Activated CD8-positive, alpha-beta memory T cell treated with anti-CD3 and anti-CD28 coated beads, Interleukin-2, amount 10 ng/mL, durations not matched to agents 7 days and 5 days (primary cell): ENCODE measurements at regions of chr11 and their contacts with region 1.

Region 1: DNA sequence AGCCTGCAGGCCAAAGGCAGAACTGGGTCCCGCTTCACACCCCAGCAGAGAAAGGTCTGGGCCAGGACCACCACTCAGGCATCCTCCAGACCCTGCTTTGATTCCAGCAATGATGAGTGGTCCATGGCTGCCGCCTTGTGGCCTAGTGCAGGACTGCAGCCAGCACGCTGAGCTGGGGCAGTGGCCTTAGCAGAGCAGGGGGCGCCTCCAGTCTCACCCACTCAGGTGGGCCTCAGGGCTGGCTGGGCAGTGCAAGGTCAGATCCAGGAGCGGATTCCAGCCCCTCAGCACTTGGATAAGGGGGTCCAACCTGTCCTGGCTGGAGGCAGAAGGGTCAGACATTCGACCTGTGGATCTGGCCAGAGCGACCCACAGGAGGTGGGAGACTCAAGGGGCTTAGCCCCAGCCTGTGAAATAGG is 9.6 kb upstream of the PDE2A start:
- DNase-seq: peak; percentile 78
- ATAC-seq: peak; percentile 70
- H3K4me3 Mint-ChIP-seq: no peak overlapping the region
- H3K27ac Mint-ChIP-seq: no peak overlapping the region
- H3K4me1 Mint-ChIP-seq: peaks cover 45% of the 10 kb centered on the region
- H3K27me3 Mint-ChIP-seq: peaks cover 11% of the 10 kb centered on the region

Region 2: GRCh38 chr11:72598906-72599305 is 84.9 kb before region 1 on chr11:
- CTCF ChIA-PET with region 1: no interaction called
- DNase-seq: no peak
- ATAC-seq: no peak
- H3K4me3 Mint-ChIP-seq: no peak overlapping the region
- H3K27ac Mint-ChIP-seq: no peak overlapping the region
- H3K4me1 Mint-ChIP-seq: peaks cover 4% of the 10 kb centered on the region
- H3K27me3 Mint-ChIP-seq: peaks cover 25% of the 10 kb centered on the region

Region 3: GRCh38 chr11:72642884-72643511 is 40.8 kb before region 1 on chr11:
- CTCF ChIA-PET with region 1: interaction called, 16 read pairs
- DNase-seq: peak; percentile 72
- ATAC-seq: peak; percentile 85
- H3K4me3 Mint-ChIP-seq: no peak overlapping the region
- H3K27ac Mint-ChIP-seq: no peak overlapping the region
- H3K4me1 Mint-ChIP-seq: peaks cover 2% of the 10 kb centered on the region
- H3K27me3 Mint-ChIP-seq: peaks cover 6% of the 10 kb centered on the region

Region 4: DNA sequence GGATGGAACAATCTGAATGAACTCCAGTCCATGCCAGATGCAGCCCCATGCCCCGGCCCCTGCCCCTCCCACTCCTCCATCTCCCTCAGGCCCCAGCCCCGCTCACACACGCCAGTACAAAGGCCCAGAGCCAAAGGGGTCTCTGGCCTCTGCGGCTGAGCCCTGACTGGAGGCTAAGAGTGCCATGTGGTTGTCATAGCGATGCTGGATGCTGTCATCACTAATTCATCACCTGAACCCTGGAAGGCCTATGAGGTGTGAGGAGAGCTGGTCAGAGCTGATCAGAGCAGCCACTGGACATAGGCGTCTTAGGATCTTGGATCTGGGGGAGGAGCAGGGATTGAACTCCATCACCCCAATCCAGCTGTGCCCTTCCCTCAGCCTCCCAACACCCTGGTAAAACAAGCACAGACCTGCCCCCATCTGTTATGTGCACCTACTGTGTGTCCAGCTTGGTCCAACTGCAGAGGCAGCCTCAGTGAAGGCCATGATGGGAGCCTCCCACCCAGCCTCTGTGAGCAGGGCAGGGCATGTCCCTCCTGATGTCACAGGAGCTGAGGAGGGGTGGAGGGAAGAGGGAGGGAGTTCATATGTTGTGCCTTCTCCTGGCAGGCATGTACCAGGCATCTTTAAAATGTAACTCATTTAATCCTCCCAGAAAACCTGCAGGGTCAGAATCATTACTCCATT is 26.2 kb before region 1 on chr11:
- CTCF ChIA-PET with region 1: interaction called, 14 read pairs
- DNase-seq: no peak
- ATAC-seq: no peak
- H3K4me3 Mint-ChIP-seq: no peak overlapping the region
- H3K27ac Mint-ChIP-seq: no peak overlapping the region
- H3K4me1 Mint-ChIP-seq: no peaks in the 10 kb centered on the region
- H3K27me3 Mint-ChIP-seq: peaks cover 27% of the 10 kb centered on the region

Region 5: DNA sequence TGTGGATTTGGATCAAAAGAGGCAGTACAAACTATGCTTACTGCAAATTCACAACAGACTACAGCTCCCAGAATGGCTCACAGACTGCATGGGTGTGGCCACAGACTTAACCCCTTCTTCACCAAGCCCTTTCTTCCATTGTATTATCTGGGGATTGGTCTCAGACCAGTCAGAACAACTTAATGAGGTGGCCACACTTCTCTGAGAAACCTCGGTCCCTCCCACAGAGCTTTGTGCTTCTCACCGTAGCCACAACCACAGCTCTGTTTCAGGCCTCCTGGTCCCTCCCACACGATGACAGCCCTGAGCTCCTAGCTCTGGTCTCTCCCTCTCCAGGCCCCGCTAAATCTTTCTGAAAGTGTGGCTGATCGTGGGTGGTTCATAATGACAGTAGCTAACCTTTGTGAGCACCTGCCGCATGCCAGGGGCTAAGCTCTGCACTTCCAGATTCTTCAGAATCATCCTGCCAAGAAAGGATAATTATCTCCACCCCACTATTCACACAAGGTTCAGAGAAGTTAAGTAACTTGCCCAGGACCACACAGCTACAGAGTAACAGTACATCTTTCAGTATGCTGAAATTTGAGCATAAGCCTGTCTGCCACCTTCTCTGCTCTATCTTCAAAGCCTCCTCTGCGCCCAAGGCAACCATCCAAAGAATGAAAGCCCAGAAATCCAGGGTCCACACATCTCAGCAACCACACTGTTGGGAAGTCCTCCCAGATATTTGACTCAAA is 15.0 kb before region 1 on chr11:
- CTCF ChIA-PET with region 1: interaction called, 69 read pairs
- DNase-seq: peak; percentile 94
- ATAC-seq: peak; percentile 94
- H3K4me3 Mint-ChIP-seq: no peak overlapping the region
- H3K27ac Mint-ChIP-seq: peak overlapping the region; percentile 69
- H3K4me1 Mint-ChIP-seq: peaks cover 34% of the 10 kb centered on the region
- H3K27me3 Mint-ChIP-seq: peaks cover 45% of the 10 kb centered on the region

Region 6: DNA sequence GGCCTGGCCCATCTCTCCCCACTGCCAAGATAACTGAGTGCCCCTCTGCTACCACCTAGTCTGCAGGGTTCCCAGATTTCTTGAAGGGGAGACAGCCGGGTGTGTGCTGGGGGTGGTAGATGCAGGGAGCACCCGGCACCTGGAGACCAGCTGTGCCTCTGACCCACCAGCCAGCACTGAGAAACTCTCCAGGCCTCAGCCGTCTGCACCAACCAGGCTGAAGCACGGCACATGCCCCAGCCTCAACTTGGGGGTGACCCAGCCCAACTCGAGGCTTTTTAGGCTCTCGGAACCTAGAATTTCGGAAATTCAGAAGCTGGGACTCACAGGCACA is 62.4 kb after region 1 on chr11:
- CTCF ChIA-PET with region 1: no interaction called
- DNase-seq: no peak
- ATAC-seq: no peak
- H3K4me3 Mint-ChIP-seq: no peak overlapping the region
- H3K27ac Mint-ChIP-seq: no peak overlapping the region
- H3K4me1 Mint-ChIP-seq: peaks cover 45% of the 10 kb centered on the region
- H3K27me3 Mint-ChIP-seq: no peaks in the 10 kb centered on the region

Region 7: DNA sequence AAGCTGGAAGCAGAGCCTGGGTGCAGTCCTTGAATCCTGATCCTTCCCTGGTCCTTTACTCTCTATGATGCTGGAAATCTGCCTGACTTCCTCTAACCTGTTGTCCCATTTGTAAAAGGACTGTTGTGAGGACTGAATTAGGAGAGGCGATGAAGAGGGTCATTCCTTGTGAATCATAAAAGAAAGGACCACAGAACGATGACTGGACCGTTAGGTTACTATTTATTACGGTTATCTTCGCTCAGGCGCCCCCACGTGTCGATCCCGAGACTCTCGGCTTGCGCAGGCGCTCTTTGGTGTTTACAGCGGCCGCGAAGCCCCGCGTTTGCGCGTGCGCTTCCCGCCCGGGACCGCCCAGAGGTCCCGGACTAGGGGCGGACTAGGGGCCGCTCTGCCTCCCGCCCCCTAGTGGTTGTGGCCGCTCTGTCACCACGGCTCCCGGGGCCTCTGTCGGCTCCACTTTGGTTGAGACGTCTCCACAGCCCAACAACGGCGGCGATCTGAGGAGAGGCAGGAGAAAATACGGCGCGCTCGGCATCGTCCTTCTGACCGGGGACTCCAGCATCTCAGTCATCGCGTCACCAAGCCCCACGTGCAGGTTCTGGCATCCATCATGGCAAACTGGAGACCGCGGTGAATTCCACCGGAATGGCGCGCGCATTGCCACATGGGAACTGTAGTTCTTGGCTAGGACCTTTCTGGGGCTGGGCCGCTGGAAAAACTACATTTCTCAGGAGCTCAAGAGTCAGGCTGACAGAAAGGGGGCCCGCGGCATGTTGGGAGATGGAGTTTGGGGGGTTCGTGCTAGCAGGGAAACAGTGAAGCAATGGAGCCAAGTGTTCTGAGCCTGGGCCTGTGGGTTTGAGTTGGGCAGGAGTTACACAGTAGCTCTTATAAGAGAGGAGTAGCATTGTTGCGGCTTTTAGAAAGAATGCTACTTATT is 109.9 kb after region 1 on chr11 and contains the start of gene STARD10:
- CTCF ChIA-PET with region 1: interaction called, 23 read pairs
- DNase-seq: peak; percentile 96
- ATAC-seq: peak; percentile 97
- H3K4me3 Mint-ChIP-seq: peak within 1 kb of the TSS; percentile 87
- H3K27ac Mint-ChIP-seq: peak within 1 kb of the TSS; percentile 98
- H3K4me1 Mint-ChIP-seq: peaks cover 24% of the 10 kb centered on the region
- H3K27me3 Mint-ChIP-seq: no peaks in the 10 kb centered on the region
- total RNA-seq, gene STARD10: 8.4 to 18.4 TPM

Region 8: GRCh38 chr11:72821221-72821882 is 137.6 kb after region 1 on chr11:
- CTCF ChIA-PET with region 1: no interaction called
- DNase-seq: no peak
- ATAC-seq: no peak
- H3K4me3 Mint-ChIP-seq: no peak overlapping the region
- H3K27ac Mint-ChIP-seq: no peak overlapping the region
- H3K4me1 Mint-ChIP-seq: peaks cover 34% of the 10 kb centered on the region
- H3K27me3 Mint-ChIP-seq: no peaks in the 10 kb centered on the region